ENCODE measurements at regions of chr17 and their contacts with region 1.

Region 1: GRCh38 chr17:4908301-4908700 is 5.4 kb upstream of the CHRNE start:
- DNase-seq: no peak

Region 2: DNA sequence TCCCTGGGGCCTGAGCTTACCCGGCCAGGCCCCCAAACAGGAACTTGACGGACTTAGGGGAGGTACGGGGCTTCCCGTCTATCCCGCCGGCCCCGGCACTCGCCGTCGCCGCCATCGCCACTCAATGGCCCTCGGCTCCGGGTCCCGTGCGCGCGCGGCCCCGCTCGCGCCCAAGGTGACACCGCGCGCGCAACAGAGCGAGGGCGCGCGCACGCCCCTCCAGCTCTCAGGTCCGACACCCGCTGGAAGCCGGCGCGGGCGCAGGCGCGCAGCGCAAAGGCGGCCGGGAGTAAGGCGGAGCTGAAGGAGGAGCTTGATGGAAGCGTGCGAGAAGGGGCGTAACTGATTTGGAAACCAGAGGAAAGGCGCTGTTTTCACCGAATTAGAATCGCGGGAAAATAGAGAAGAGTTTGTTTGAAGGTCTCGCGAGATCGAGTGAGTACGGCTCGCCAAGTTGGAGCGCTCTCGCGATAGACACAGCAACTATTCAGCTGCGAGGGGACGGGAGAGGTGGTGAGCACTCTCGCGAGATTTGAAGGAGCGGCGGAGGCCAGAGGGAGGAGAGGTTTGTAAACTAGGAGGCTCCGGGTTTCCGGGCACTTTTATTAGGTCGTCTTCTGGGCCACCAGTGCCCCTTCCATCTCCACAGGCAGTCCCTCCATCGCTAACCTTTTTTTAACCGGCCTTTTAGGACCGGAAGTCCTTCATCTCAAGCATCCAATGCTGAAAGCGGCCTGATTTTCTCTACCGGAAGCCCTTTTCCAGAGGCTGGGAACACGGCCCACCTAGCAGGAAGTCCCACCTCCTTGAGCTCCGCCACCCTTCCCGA is 31.7 kb after region 1 on chr17 and contains the starts of genes RNF167 and SLC25A11:
- intact Hi-C with region 1: loop called (anchors 5 kb)
- DNase-seq: peak; percentile 97
- total RNA-seq, gene RNF167: 84.7 TPM
- total RNA-seq, gene SLC25A11: 176 TPM

Region 3: GRCh38 chr17:4986951-4987766 is 78.9 kb after region 1 on chr17 and contains the start of gene CAMTA2:
- intact Hi-C with region 1: loop called (anchors 1 kb)
- DNase-seq: peak; percentile 96
- total RNA-seq, gene CAMTA2: 38.9 TPM

Region 4: DNA sequence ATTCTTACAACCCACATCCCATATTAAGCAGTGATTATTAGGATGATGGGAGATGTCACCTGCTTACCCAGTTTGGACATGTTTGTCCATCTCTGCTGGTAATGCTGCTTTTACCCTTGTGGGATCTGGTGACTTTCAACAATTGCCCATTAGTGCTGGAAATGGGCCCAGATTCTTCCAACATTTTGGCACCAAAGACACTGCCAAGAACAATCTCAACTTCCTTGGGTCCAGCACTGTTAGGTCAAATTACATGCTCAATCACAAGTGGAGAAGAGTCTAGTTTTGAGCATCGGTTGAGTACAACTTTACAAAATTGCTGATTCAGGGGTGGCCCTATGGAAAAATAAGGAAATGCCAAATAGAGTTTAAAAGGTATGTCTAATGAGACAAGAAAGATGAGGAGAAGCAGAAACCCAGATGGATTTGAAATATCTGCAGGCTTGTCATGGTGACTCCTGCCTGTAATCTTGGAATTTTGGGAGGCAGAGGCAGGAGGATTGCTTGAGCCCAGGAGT is 157.0 kb after region 1 on chr17:
- intact Hi-C with region 1: loop called (anchors 1 kb)
- DNase-seq: no peak

Region 5: GRCh38 chr17:5281814-5282653 is 373.7 kb after region 1 on chr17 and contains the start of gene RABEP1:
- intact Hi-C with region 1: no loop called
- DNase-seq: peak; percentile 98
- total RNA-seq, gene RABEP1: 65.2 TPM